Heart left ventricle (tissue), 16 donors: ENCODE measurements at regions of chr22 and their contacts with region 1.

Region 1: GRCh38 chr22:39388261-39389011 is 11.1 kb upstream of the TAB1 start:
- DNase-seq: peak; percentile 83 to 91 (median 89)
- ATAC-seq: peak; percentile 83 to 97 (median 94)
- H3K4me3 ChIP-seq: peak overlapping the region; percentile 33 to 73 (median 59)
- H3K27ac ChIP-seq: peak overlapping the region in 3 of 12 donors; percentile 10 to 40 (median 32)
- H3K4me1 ChIP-seq: peaks cover 0 to 16% (median 5%) of the 10 kb centered on the region in 12 donors
- H3K27me3 ChIP-seq: no peaks in the 10 kb centered on the region
- CTCF ChIP-seq: no peak
- POLR2A ChIP-seq: no peak

Region 2: DNA sequence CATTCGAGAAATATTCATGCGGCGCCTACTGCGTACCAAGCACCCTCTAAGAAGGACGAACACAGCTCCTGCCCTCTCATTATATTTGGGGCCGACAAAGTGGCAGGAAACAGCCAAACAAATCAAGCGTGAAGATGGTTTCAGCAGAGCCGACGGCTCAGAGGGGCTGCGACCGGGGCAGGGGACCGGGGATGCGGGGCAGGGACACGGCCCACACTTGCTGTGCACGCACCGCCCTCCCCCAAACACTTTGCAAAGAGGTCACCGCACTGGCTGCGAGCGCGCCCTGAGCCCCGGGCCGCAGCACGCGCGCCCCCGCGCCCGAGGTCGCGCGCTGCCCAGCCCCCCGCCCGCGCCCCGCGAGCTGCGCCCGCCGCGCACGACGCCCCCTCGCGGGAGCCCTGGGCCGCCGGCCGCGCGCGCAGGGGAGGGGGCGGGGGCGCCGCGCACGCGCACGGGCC is 38.9 kb before region 1 on chr22:
- intact Hi-C with region 1: loop called in 1 of 10 experiments (anchors 5 kb)
- DNase-seq: peak in 3 of 5 donors; percentile 50 to 59 (median 54)
- ATAC-seq: peak; percentile 38 to 69 (median 57)
- H3K4me3 ChIP-seq: peak overlapping the region; percentile 59 to 97 (median 74)
- H3K27ac ChIP-seq: peak overlapping the region in 11 of 12 donors; percentile 46 to 85 (median 69)
- H3K4me1 ChIP-seq: peaks cover 0 to 22% (median 10%) of the 10 kb centered on the region in 12 donors
- H3K27me3 ChIP-seq: peaks cover 0 to under 1% (median 0%) of the 10 kb centered on the region in 9 donors
- CTCF ChIP-seq: no peak
- POLR2A ChIP-seq: no peak

Region 3: GRCh38 chr22:39723899-39724351 is 335.5 kb after region 1 on chr22:
- intact Hi-C with region 1: no loop called
- DNase-seq: no peak
- ATAC-seq: peak in 2 of 4 donors; percentile 22 to 37
- H3K4me3 ChIP-seq: no peak overlapping the region
- H3K27ac ChIP-seq: no peak overlapping the region
- H3K4me1 ChIP-seq: no peaks in the 10 kb centered on the region
- H3K27me3 ChIP-seq: peaks cover 0 to 20% (median 0%) of the 10 kb centered on the region in 9 donors
- CTCF ChIP-seq: no peak
- POLR2A ChIP-seq: no peak